IMR-90 (cell line): ENCODE measurements at regions of chr17 and their contacts with region 1.

Region 1: GRCh38 chr17:72556944-72557826 is 436.4 kb downstream of the SOX9 start:
- DNase-seq: peak; percentile 57
- ATAC-seq: peak; percentile 80
- H3K4me3 ChIP-seq: no peak overlapping the region
- H3K27ac ChIP-seq: no peak overlapping the region
- H3K4me1 ChIP-seq: peaks cover 1% of the 10 kb centered on the region; the same call in 1 of the 2 replicates
- H3K27me3 ChIP-seq: no peaks in the 10 kb centered on the region
- CTCF ChIP-seq: peak; percentile 83
- POLR2A ChIP-seq: no peak
- RAD21 ChIP-seq: peak; percentile 90

Region 2: GRCh38 chr17:72592242-72592966 is 35.2 kb after region 1 on chr17:
- CTCF ChIA-PET with region 1: interaction called, 14 read pairs
- POLR2A ChIA-PET with region 1: no interaction called
- dilution Hi-C with region 1: no loop called
- in situ Hi-C with region 1: no loop called
- intact Hi-C with region 1: no loop called
- DNase-seq: peak; percentile 84
- ATAC-seq: peak; percentile 89
- H3K4me3 ChIP-seq: peak overlapping the region; percentile 99
- H3K27ac ChIP-seq: peak overlapping the region; percentile 91
- H3K4me1 ChIP-seq: peaks cover 22% of the 10 kb centered on the region
- H3K27me3 ChIP-seq: no peaks in the 10 kb centered on the region
- CTCF ChIP-seq: no peak
- POLR2A ChIP-seq: peak; percentile 100
- RAD21 ChIP-seq: no peak; the same call in 1 of the 2 replicates

Region 3: GRCh38 chr17:72622661-72623433 is 65.7 kb after region 1 on chr17:
- CTCF ChIA-PET with region 1: no interaction called
- POLR2A ChIA-PET with region 1: no interaction called
- dilution Hi-C with region 1: no loop called
- in situ Hi-C with region 1: no loop called
- intact Hi-C with region 1: no loop called
- DNase-seq: no peak
- ATAC-seq: no peak
- H3K4me3 ChIP-seq: no peak overlapping the region
- H3K27ac ChIP-seq: no peak overlapping the region
- H3K4me1 ChIP-seq: no peaks in the 10 kb centered on the region
- H3K27me3 ChIP-seq: peaks cover 25% of the 10 kb centered on the region
- CTCF ChIP-seq: no peak
- POLR2A ChIP-seq: no peak
- RAD21 ChIP-seq: no peak

Region 4: GRCh38 chr17:72985881-72986720 is 428.9 kb after region 1 on chr17:
- CTCF ChIA-PET with region 1: interaction called, 9 read pairs
- POLR2A ChIA-PET with region 1: no interaction called
- dilution Hi-C with region 1: no loop called
- in situ Hi-C with region 1: loop called (anchors 25 kb)
- intact Hi-C with region 1: loop called (anchors 5 kb)
- DNase-seq: peak; percentile 80
- ATAC-seq: peak; percentile 80
- H3K4me3 ChIP-seq: no peak overlapping the region
- H3K27ac ChIP-seq: no peak overlapping the region
- H3K4me1 ChIP-seq: peaks cover 15% of the 10 kb centered on the region
- H3K27me3 ChIP-seq: no peaks in the 10 kb centered on the region
- CTCF ChIP-seq: peak; percentile 84
- POLR2A ChIP-seq: no peak
- RAD21 ChIP-seq: peak; percentile 85

Region 5: GRCh38 chr17:73192894-73193701 is 635.9 kb after region 1 on chr17 and contains the start of gene COG1:
- CTCF ChIA-PET with region 1: interaction called, 7 read pairs
- POLR2A ChIA-PET with region 1: no interaction called
- dilution Hi-C with region 1: no loop called
- in situ Hi-C with region 1: loop called (anchors 10 kb)
- intact Hi-C with region 1: loop called (anchors 1 kb)
- DNase-seq: peak; percentile 84
- ATAC-seq: peak; percentile 89
- H3K4me3 ChIP-seq: peak within 1 kb of the TSS; percentile 99
- H3K27ac ChIP-seq: peak within 1 kb of the TSS; percentile 93
- H3K4me1 ChIP-seq: peaks cover 5% of the 10 kb centered on the region
- H3K27me3 ChIP-seq: no peaks in the 10 kb centered on the region
- CTCF ChIP-seq: 0 out of 2 replicates have a peak, but pooled peaks have one; percentile 4
- POLR2A ChIP-seq: peak; percentile 88
- RAD21 ChIP-seq: no peak
- total RNA-seq, gene COG1: 14.4 and 18.3 TPM in 2 replicates